ENCODE measurements at regions of chr16 and their contacts with region 1.

Region 1: DNA sequence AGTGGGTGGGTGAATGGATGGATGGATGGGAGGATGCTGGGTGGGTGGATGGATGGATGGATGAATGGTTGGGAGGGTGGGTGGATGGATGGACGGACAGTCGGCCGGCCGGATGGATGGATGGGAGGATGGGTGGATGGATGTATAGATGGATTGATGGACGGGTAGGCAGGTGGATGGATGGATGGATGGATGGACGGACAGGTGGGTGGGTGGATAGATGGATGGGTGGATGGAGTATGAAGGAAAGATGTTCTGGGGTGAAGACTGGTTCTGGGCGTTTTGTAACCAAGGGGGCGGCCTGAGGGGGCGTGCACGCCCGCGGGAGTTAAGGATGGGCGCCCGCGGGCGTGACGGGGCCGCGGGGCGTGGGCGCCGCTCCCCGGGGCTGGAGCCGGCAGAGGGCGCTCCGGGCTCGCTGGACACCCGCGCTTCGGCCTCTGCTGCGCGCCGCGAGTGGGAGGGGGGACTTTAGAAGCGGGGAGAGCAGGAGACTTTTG is at the start of gene NECAB2:
- DNase-seq: no peak
- H3K4me3 ChIP-seq: peak within 1 kb of the TSS; percentile 29 to 31
- H3K27ac ChIP-seq: no peak within 1 kb of the TSS
- H3K4me1 ChIP-seq: no peaks in the 10 kb centered on the region
- H3K27me3 ChIP-seq: no peaks in the 10 kb centered on the region
- CTCF ChIP-seq: peak; percentile 24 to 67 (median 56)
- POLR2A ChIP-seq: no peak
- total RNA-seq, gene NECAB2: 2.8 TPM in 1 of 2 donors, not detected in the other

Region 2: DNA sequence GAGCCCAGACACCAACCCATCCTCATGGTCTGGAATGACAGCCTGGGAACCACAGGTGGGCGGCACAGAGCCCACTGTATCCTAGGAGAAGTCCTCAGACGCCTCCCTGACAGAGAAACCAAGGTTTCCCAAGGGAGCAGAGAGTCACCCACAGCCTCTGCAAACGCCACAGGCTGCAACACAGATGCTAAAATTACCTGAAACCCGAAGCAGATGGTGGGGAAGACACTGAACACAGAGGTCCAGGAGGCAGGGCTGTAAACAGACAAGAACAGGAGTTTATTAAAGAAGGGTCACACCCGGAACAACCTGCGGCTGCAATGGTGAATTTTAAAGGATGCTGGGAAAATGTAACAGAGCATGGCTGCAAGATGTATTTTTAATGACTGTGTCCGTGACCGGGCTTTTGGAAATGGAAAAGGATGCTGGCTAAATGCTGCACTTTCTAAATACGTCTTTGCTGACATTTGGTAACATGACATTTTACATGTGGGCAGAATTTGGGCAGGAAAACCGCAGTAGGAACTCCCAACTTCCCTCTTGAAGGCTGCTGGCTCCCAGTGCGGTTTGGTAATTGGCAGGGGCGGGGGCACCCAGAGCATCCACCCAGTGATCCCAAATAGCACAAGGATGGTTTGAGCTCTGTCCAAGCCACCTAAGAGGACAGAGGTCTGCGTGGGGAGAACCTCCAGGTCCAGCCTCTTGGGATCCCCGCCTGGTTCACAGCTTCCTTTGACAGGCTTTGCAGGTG is 61.6 kb after region 1 on chr16:
- intact Hi-C with region 1: no loop called
- DNase-seq: no peak
- H3K4me3 ChIP-seq: no peak overlapping the region
- H3K27ac ChIP-seq: no peak overlapping the region
- H3K4me1 ChIP-seq: no peaks in the 10 kb centered on the region
- H3K27me3 ChIP-seq: no peaks in the 10 kb centered on the region
- CTCF ChIP-seq: no peak
- POLR2A ChIP-seq: no peak

Region 3: DNA sequence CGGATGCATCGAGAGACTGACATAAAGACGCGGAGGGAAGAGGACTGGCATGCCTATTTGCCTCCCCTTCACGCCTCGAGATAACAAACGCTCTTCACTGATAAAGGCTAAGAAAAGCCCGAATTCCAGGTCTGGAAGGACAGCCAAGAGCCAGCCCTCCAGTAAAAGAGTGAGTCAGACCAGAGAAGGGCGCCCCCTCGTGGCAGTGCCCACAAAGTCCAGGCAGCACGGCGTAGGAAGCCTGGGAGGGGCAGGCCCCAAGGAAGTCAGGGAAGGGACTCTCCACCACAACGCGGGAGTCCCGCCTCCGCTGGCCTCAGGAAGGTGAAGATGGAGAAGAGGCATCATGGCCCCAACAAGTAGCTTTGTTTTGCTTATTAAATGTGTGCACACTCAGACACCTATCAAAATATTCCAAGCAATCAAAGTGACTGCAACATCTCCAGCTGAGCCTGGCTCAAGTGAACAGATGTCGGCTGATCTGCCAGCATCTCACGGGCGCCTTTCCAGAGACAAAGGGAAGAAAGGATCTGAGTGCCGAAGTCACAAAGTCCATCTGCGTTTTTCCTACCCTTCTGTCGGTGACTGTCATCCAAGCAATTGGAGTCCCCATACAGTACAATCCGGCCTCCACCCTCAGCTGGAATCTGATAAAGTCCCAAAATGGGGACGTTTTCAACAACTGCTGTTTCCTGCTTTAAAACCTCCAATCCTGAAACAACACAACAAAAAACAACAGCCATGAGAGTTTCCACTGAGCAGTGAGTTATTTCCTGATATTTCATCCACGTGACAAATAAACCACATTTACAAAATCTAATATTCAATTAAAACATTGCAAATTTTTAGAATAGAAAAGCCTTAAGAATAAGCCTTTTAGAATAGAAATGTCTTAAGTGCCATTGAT is 95.1 kb after region 1 on chr16:
- intact Hi-C with region 1: loop called (anchors 5 kb)
- DNase-seq: peak; percentile 51
- H3K4me3 ChIP-seq: no peak overlapping the region
- H3K27ac ChIP-seq: no peak overlapping the region
- H3K4me1 ChIP-seq: no peaks in the 10 kb centered on the region
- H3K27me3 ChIP-seq: no peaks in the 10 kb centered on the region
- CTCF ChIP-seq: peak; percentile 58 to 83 (median 66)
- POLR2A ChIP-seq: no peak

Region 4: GRCh38 chr16:84175350-84176081 is 207.7 kb after region 1 on chr16:
- intact Hi-C with region 1: loop called (anchors 10 kb)
- DNase-seq: peak; percentile 51
- H3K4me3 ChIP-seq: no peak overlapping the region
- H3K27ac ChIP-seq: peak overlapping the region; percentile 27 to 74
- H3K4me1 ChIP-seq: peaks cover 6% of the 10 kb centered on the region
- H3K27me3 ChIP-seq: no peaks in the 10 kb centered on the region
- CTCF ChIP-seq: peak; percentile 47 to 87 (median 66)
- POLR2A ChIP-seq: no peak